Caco-2 (cell line): ENCODE measurements at regions of chrX and their contacts with region 1.

Region 1: DNA sequence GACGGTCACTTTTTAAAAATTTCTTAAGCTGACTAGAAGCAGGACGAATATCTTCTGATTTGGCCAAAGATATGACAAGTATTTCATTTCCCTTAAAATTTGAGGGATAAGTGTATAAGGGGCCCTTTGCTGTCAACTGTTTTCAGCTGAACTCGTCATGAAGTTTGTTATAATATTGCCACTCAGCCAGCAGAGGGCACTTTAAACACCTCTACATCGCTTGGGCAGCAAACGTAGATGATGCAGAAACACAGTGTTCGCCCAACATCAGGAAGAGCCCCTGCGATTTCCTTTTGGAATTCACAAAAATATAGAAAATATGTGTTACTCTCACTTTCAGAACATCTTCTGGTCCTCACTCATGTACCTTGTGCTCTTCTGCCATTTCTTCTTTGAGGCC is 435.7 kb upstream of the FMR1 start:
- DNase-seq: peak in 1 of 2 experiments; percentile 4
- H3K4me3 ChIP-seq: no peak overlapping the region
- H3K4me3 Mint-ChIP-seq: no peak overlapping the region
- H3K27ac Mint-ChIP-seq: no peak overlapping the region
- H3K4me1 ChIP-seq: no peaks in the 10 kb centered on the region
- H3K4me1 Mint-ChIP-seq: no peaks in the 10 kb centered on the region
- H3K27me3 ChIP-seq: no peaks in the 10 kb centered on the region
- H3K27me3 Mint-ChIP-seq: no peaks in the 10 kb centered on the region
- CTCF ChIP-seq: peak; percentile 22 to 42

Region 2: GRCh38 chrX:147403075-147403474 is 72.9 kb before region 1 on chrX:
- CTCF ChIA-PET with region 1: no interaction called
- POLR2A ChIA-PET with region 1: no interaction called
- intact Hi-C with region 1: no loop called
- DNase-seq: no peak
- H3K4me3 ChIP-seq: no peak overlapping the region
- H3K4me3 Mint-ChIP-seq: no peak overlapping the region
- H3K27ac Mint-ChIP-seq: no peak overlapping the region
- H3K4me1 ChIP-seq: no peaks in the 10 kb centered on the region
- H3K4me1 Mint-ChIP-seq: no peaks in the 10 kb centered on the region
- H3K27me3 ChIP-seq: no peaks in the 10 kb centered on the region
- H3K27me3 Mint-ChIP-seq: no peaks in the 10 kb centered on the region
- CTCF ChIP-seq: no peak

Region 3: GRCh38 chrX:147550217-147550616 is 74.2 kb after region 1 on chrX:
- CTCF ChIA-PET with region 1: no interaction called
- POLR2A ChIA-PET with region 1: no interaction called
- intact Hi-C with region 1: loop called (anchors 1 kb)
- DNase-seq: peak; percentile 13 to 22
- H3K4me3 ChIP-seq: no peak overlapping the region
- H3K4me3 Mint-ChIP-seq: no peak overlapping the region
- H3K27ac Mint-ChIP-seq: no peak overlapping the region
- H3K4me1 ChIP-seq: no peaks in the 10 kb centered on the region
- H3K4me1 Mint-ChIP-seq: no peaks in the 10 kb centered on the region
- H3K27me3 ChIP-seq: no peaks in the 10 kb centered on the region
- H3K27me3 Mint-ChIP-seq: no peaks in the 10 kb centered on the region
- CTCF ChIP-seq: peak; percentile 9 to 19

Region 4: GRCh38 chrX:147602176-147602696 is 126.2 kb after region 1 on chrX:
- CTCF ChIA-PET with region 1: no interaction called
- POLR2A ChIA-PET with region 1: no interaction called
- intact Hi-C with region 1: loop called (anchors 1 kb)
- DNase-seq: peak; percentile 1 to 17
- H3K4me3 ChIP-seq: no peak overlapping the region
- H3K4me3 Mint-ChIP-seq: no peak overlapping the region
- H3K27ac Mint-ChIP-seq: no peak overlapping the region
- H3K4me1 ChIP-seq: no peaks in the 10 kb centered on the region
- H3K4me1 Mint-ChIP-seq: no peaks in the 10 kb centered on the region
- H3K27me3 ChIP-seq: no peaks in the 10 kb centered on the region
- H3K27me3 Mint-ChIP-seq: no peaks in the 10 kb centered on the region
- CTCF ChIP-seq: no peak